ENCODE measurements at regions of chr12 and their contacts with region 1.

Region 1: DNA sequence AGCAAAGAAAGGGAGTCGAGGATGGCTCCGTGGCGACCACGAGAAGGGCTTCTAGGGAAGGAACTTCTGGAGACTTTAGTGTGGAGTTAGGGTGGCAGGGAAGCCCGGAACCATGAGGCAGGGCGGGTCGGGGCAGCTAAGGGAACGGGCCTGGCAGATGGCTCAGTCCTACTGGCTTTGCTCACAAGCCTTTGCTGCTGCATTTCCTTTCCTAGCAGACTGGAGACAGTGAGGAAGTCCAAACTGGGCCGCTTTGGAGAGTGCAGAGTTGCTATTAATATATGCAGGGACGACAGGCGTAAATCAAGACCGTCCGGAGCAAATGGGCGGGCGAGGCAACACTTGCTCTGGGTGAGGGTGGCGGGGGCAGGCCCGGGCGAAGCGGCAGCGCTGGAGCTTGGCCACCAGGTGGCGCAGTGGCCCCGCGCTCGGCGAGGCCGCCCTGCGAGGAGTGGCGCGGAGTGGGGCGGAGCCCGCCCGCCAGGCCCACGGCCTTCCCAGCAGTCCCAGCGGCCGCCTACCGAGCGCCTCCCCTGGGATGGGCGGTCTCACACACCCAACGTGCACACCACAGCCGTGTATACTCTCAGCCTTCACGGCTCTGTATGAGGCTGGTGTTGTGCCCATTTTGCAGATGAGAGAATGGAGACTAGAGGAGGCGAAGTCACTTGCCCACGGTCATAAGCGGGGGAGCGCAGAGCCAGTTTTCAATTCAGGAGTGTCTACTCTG is 24.4 kb upstream of the LRTM2 start:
- DNase-seq: peak; percentile 92 to 95 (median 94)
- ATAC-seq: peak; percentile 95
- H3K4me3 ChIP-seq: peak overlapping the region; percentile 1 to 3
- H3K27ac ChIP-seq: peak overlapping the region; percentile 32 to 80 (median 58)
- H3K4me1 ChIP-seq: peaks cover 21% of the 10 kb centered on the region
- H3K27me3 ChIP-seq: no peaks in the 10 kb centered on the region
- CTCF ChIP-seq: peak; percentile 79 to 99 (median 98)
- POLR2A ChIP-seq: peak; percentile 49 to 76 (median 72)

Region 2: DNA sequence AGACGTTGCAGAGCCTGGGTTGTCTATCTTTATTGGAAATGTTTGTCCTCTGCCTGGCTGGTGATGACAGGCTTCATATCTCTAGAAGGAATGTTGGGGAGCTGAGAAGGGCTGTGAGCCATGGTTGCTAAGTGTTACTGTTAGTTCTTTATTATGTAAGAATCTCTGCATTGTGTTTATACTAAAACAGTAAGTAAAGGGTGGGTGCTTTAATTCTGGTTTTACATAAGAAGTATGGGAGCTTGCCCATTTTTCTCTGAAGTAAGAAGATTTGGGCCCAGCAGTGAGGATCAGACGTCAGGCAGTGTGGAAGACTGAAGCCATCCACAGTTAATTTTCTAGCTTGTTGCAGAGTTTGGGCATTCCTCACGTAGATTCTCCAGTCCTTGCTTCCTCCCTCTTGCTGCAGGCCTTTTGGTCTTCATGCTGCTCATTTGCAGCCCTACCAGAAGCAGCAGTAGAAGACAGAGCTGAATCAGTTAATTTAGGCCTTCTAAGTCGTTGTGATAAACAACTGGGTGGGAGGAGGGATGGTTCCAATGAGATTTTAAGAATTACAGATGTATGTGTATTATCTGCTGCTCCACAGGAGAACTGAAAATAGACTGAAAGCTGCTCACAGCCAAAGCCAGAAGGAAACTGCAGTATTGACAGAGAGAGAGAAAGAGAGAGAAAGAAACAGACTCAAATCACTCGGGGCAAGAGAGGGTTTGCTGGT is 145.5 kb before region 1 on chr12:
- intact Hi-C with region 1: loop called (anchors 5 kb)
- DNase-seq: no peak
- ATAC-seq: no peak
- H3K4me3 ChIP-seq: no peak overlapping the region
- H3K27ac ChIP-seq: no peak overlapping the region
- H3K4me1 ChIP-seq: no peaks in the 10 kb centered on the region
- H3K27me3 ChIP-seq: no peaks in the 10 kb centered on the region
- CTCF ChIP-seq: no peak
- POLR2A ChIP-seq: no peak